CD4-positive, alpha-beta T cell (primary cell): ENCODE measurements at regions of chr18 and their contacts with region 1.

Region 1: GRCh38 chr18:3245853-3246634 is 1.6 kb upstream of the MYL12A start:
- DNase-seq: peak; percentile 57 to 89 (median 70)
- ATAC-seq: peak; percentile 57
- H3K4me3 ChIP-seq: peak overlapping the region; percentile 84
- H3K4me3 Mint-ChIP-seq: peak overlapping the region; percentile 93
- H3K27ac ChIP-seq: peak overlapping the region; percentile 84 to 92
- H3K27ac Mint-ChIP-seq: peak overlapping the region; percentile 100
- H3K4me1 ChIP-seq: peaks cover 32% of the 10 kb centered on the region
- H3K4me1 Mint-ChIP-seq: peaks cover 29% of the 10 kb centered on the region
- H3K27me3 ChIP-seq: no peaks in the 10 kb centered on the region
- H3K27me3 Mint-ChIP-seq: no peaks in the 10 kb centered on the region
- CTCF ChIP-seq: peak; percentile 72

Region 2: GRCh38 chr18:2571200-2572143 is 674.6 kb before region 1 on chr18 and contains the starts of genes METTL4 and NDC80:
- CTCF ChIA-PET with region 1: interaction called, 3 read pairs
- POLR2A ChIA-PET with region 1: no interaction called
- intact Hi-C with region 1: loop called in 1 of 2 experiments (anchors 10 kb)
- DNase-seq: peak; percentile 71 to 94 (median 78)
- ATAC-seq: peak; percentile 81
- H3K4me3 ChIP-seq: peak within 1 kb of the TSS; percentile 90
- H3K4me3 Mint-ChIP-seq: peak within 1 kb of the TSS; percentile 100
- H3K27ac ChIP-seq: peak within 1 kb of the TSS; percentile 90 to 99
- H3K27ac Mint-ChIP-seq: peak within 1 kb of the TSS; percentile 99
- H3K4me1 ChIP-seq: peaks cover 27% of the 10 kb centered on the region
- H3K4me1 Mint-ChIP-seq: peaks cover 70% of the 10 kb centered on the region
- H3K27me3 ChIP-seq: no peaks in the 10 kb centered on the region
- H3K27me3 Mint-ChIP-seq: no peaks in the 10 kb centered on the region
- CTCF ChIP-seq: no peak
- total RNA-seq, gene METTL4: 6.5 to 10.4 TPM
- total RNA-seq, gene NDC80: 6.3 to 7.5 TPM

Region 3: GRCh38 chr18:2805970-2806943 is 439.8 kb before region 1 on chr18:
- CTCF ChIA-PET with region 1: no interaction called
- POLR2A ChIA-PET with region 1: no interaction called
- intact Hi-C with region 1: no loop called
- DNase-seq: no peak
- ATAC-seq: no peak
- H3K4me3 ChIP-seq: no peak overlapping the region
- H3K4me3 Mint-ChIP-seq: no peak overlapping the region
- H3K27ac ChIP-seq: no peak overlapping the region
- H3K27ac Mint-ChIP-seq: no peak overlapping the region
- H3K4me1 ChIP-seq: no peaks in the 10 kb centered on the region
- H3K4me1 Mint-ChIP-seq: no peaks in the 10 kb centered on the region
- H3K27me3 ChIP-seq: no peaks in the 10 kb centered on the region
- H3K27me3 Mint-ChIP-seq: no peaks in the 10 kb centered on the region
- CTCF ChIP-seq: no peak

Region 4: DNA sequence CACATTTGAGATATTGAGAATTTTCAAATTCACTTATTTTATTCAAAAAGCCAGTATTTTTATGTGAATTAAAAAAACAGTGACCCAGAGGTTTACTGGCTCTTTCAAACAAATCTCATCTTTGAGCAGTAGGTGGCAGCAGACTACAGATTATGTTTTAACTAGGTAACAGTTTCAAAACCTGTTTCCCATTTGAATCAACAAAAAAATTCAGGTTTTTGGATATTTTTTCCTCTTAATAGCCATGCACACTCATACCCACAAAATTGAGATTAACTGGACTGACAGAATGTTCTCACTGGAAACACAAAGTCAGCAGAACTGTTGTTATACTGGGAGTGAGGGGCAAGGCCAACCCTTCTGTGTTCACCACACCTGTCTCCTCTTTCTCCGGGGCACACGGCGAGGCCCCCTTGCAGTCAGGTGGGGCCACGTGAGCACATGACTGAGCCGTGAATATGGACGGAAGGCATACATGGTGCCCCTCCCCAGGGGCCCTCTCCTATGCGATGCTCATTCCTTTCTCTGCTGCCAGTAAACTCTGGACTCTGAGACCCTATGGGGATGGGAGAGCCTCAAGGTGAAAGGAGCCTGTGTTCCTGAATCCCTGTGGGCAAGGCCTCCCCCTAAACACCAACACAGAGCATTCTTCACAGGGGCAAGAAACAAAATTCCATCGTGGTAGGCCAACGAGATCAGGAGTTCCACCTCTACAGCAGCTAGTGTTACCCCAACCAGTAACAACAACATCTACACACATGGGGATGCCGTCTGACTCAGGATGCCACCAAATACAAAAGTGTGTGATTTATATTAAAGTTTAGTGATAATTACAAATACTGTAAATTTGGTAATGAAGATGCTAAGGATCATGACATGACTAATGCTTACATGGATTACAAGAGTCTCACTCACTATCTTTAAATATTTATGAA is 313.5 kb before region 1 on chr18:
- CTCF ChIA-PET with region 1: interaction called, 5 read pairs
- POLR2A ChIA-PET with region 1: interaction called, 3 read pairs
- intact Hi-C with region 1: loop called (anchors 1 to 2 kb)
- DNase-seq: peak in 8 of 14 experiments; percentile 13 to 84 (median 51)
- ATAC-seq: peak; percentile 80
- H3K4me3 ChIP-seq: no peak overlapping the region
- H3K4me3 Mint-ChIP-seq: no peak overlapping the region
- H3K27ac ChIP-seq: peak overlapping the region; percentile 18 to 51
- H3K27ac Mint-ChIP-seq: peak overlapping the region; percentile 67
- H3K4me1 ChIP-seq: peaks cover 9% of the 10 kb centered on the region
- H3K4me1 Mint-ChIP-seq: peaks cover 36% of the 10 kb centered on the region
- H3K27me3 ChIP-seq: no peaks in the 10 kb centered on the region
- H3K27me3 Mint-ChIP-seq: no peaks in the 10 kb centered on the region
- CTCF ChIP-seq: peak; percentile 92

Region 5: GRCh38 chr18:2971741-2972552 is 274.1 kb before region 1 on chr18:
- CTCF ChIA-PET with region 1: interaction called, 4 read pairs
- POLR2A ChIA-PET with region 1: interaction called, 14 read pairs
- intact Hi-C with region 1: no loop called
- DNase-seq: peak; percentile 42 to 91 (median 62)
- ATAC-seq: peak; percentile 73
- H3K4me3 ChIP-seq: peak overlapping the region; percentile 45
- H3K4me3 Mint-ChIP-seq: peak overlapping the region; percentile 92
- H3K27ac ChIP-seq: peak overlapping the region; percentile 81 to 89
- H3K27ac Mint-ChIP-seq: peak overlapping the region; percentile 96
- H3K4me1 ChIP-seq: peaks cover 79% of the 10 kb centered on the region
- H3K4me1 Mint-ChIP-seq: peaks cover 91% of the 10 kb centered on the region
- H3K27me3 ChIP-seq: no peaks in the 10 kb centered on the region
- H3K27me3 Mint-ChIP-seq: no peaks in the 10 kb centered on the region
- CTCF ChIP-seq: no peak

Region 6: GRCh38 chr18:2994603-2995432 is 251.2 kb before region 1 on chr18:
- CTCF ChIA-PET with region 1: interaction called, 14 read pairs
- POLR2A ChIA-PET with region 1: interaction called, 31 read pairs
- intact Hi-C with region 1: loop called (anchors 1 to 2 kb)
- DNase-seq: peak; percentile 54 to 87 (median 68)
- ATAC-seq: peak; percentile 82
- H3K4me3 ChIP-seq: peak overlapping the region; percentile 24
- H3K4me3 Mint-ChIP-seq: peak overlapping the region; percentile 52
- H3K27ac ChIP-seq: no peak overlapping the region
- H3K27ac Mint-ChIP-seq: peak overlapping the region; percentile 61
- H3K4me1 ChIP-seq: peaks cover 61% of the 10 kb centered on the region
- H3K4me1 Mint-ChIP-seq: peaks cover 82% of the 10 kb centered on the region
- H3K27me3 ChIP-seq: no peaks in the 10 kb centered on the region
- H3K27me3 Mint-ChIP-seq: no peaks in the 10 kb centered on the region
- CTCF ChIP-seq: peak; percentile 75

Region 7: GRCh38 chr18:3151399-3152264 is 94.4 kb before region 1 on chr18:
- CTCF ChIA-PET with region 1: interaction called, 24 read pairs
- POLR2A ChIA-PET with region 1: interaction called, 8 read pairs
- intact Hi-C with region 1: loop called (anchors 1 to 2 kb)
- DNase-seq: peak in 3 of 14 experiments; percentile 49 to 60 (median 58)
- ATAC-seq: no peak
- H3K4me3 ChIP-seq: no peak overlapping the region
- H3K4me3 Mint-ChIP-seq: no peak overlapping the region
- H3K27ac ChIP-seq: no peak overlapping the region
- H3K27ac Mint-ChIP-seq: no peak overlapping the region
- H3K4me1 ChIP-seq: peaks cover 4% of the 10 kb centered on the region
- H3K4me1 Mint-ChIP-seq: peaks cover 3% of the 10 kb centered on the region
- H3K27me3 ChIP-seq: no peaks in the 10 kb centered on the region
- H3K27me3 Mint-ChIP-seq: no peaks in the 10 kb centered on the region
- CTCF ChIP-seq: peak; percentile 95

Region 8: DNA sequence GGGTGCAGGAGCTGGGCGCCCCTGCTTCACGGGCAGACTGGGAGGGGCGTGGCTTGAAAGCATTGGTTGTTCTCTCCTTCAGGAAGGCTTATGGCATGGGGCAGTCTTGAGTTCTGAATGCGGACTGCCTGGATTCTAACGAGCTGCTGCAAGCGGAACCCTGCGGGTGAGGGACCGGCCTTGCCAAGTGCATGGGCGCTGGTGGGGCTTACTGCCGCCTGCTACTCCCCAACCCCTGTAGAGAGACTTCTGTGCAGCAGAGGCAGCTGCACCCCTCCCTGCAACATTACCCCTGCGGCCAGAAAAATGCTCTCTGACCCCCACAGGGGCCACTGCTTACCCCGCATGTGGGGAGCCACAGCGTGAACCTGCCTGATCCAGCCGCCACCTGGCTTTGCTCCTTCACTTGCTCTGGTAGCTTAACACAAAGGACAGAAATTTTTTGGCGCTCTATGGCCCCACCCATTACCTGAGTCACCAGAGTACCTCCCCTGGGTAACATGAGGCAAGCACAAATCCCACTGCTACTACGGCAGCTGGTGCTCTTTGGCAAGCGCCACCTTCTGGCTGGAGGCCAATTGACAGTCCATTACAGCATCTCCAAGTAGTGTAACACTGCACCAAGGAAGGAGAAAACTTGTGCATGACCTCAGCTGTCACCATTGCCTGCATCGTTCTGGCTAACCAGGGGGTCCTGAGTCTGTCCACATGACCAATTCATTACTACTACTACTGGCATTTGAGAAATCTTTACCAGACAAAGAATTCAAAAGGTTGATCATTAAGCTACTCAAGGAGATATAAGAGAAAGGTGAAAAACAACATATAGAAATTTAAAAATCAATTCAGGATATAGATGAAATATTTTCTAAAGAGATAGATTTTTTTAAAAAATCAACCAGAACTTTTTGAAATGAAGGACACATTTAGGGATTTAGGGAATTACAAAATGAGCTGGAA is 51.3 kb after region 1 on chr18:
- CTCF ChIA-PET with region 1: interaction called, 12 read pairs
- POLR2A ChIA-PET with region 1: interaction called, 14 read pairs
- intact Hi-C with region 1: no loop called
- DNase-seq: peak; percentile 88 to 96 (median 92)
- ATAC-seq: peak; percentile 96
- H3K4me3 ChIP-seq: peak overlapping the region; percentile 65
- H3K4me3 Mint-ChIP-seq: peak overlapping the region; percentile 91
- H3K27ac ChIP-seq: no peak overlapping the region
- H3K27ac Mint-ChIP-seq: peak overlapping the region; percentile 79
- H3K4me1 ChIP-seq: peaks cover 11% of the 10 kb centered on the region
- H3K4me1 Mint-ChIP-seq: peaks cover 11% of the 10 kb centered on the region
- H3K27me3 ChIP-seq: peaks cover 0 to 15% of the 10 kb centered on the region in 2 experiments
- H3K27me3 Mint-ChIP-seq: peaks cover 35% of the 10 kb centered on the region
- CTCF ChIP-seq: peak; percentile 80